ENCODE measurements at regions of chr20 and their contacts with region 1.

Region 1: GRCh38 chr20:472889-473292 is 10.6 kb upstream of the TBC1D20 start:
- DNase-seq: no peak
- ATAC-seq: peak; percentile 26 to 54; a peak in 3 of 6 replicates
- H3K4me3 ChIP-seq: no peak overlapping the region
- H3K27ac ChIP-seq: no peak overlapping the region
- H3K4me1 ChIP-seq: no peaks in the 10 kb centered on the region
- CTCF ChIP-seq: no peak
- EP300 ChIP-seq: no peak
- POLR2A ChIP-seq: no peak
- RAD21 ChIP-seq: no peak

Region 2: DNA sequence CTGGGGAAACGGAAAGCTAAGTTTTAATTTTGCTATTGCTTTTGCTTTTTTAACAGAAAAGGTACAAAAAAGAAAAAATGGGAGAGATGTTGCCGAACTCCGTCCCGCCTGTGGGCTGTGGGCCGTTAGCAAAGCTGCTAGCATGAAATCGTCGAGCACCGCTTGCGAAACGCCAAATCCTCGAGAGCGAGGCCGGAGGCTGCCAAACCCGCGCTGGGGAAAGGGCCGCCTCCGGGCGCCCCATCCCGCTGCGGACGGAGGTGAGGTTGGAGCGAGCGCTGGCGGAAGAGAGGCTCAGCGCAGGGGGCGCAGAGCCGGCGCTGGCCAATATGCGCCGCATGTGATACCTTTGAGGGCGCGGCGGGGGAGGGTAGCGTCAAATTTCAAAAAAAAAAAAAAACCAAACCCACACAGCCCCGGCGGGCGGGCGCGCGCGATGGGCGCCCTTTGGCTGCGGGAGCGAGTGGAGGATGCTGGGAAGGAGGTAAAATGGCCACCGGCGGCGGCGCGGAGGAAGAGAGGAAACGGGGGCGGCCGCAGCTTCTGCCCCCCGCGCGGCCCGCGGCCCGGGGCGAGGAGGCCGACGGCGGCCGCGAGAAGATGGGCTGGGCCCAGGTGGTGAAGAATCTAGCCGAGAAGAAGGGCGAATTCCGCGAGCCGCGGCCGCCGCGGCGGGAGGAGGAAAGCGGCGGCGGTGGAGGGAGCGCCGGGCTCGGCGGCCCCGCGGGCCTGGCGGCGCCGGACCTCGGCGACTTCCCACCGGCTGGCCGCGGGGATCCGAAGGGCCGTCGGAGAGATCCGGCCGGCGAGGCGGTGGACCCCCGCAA is 175.6 kb before region 1 on chr20 and contains the start of gene ZCCHC3:
- CTCF ChIA-PET with region 1: no interaction called
- POLR2A ChIA-PET with region 1: no interaction called
- DNase-seq: peak; percentile 94 to 95
- ATAC-seq: peak; percentile 92 to 96
- H3K4me3 ChIP-seq: peak within 1 kb of the TSS; percentile 75
- H3K27ac ChIP-seq: peak within 1 kb of the TSS; percentile 95 to 97
- H3K4me1 ChIP-seq: peaks cover 33% of the 10 kb centered on the region
- CTCF ChIP-seq: peak; percentile 31; the same call in 2 of the 3 replicates
- EP300 ChIP-seq: no peak
- POLR2A ChIP-seq: peak; percentile 51
- RAD21 ChIP-seq: peak; percentile 5 to 46; a peak in 3 of 5 replicates
- polyA plus RNA-seq, gene ZCCHC3: 17.4 and 19.8 TPM in 2 replicates

Region 3: DNA sequence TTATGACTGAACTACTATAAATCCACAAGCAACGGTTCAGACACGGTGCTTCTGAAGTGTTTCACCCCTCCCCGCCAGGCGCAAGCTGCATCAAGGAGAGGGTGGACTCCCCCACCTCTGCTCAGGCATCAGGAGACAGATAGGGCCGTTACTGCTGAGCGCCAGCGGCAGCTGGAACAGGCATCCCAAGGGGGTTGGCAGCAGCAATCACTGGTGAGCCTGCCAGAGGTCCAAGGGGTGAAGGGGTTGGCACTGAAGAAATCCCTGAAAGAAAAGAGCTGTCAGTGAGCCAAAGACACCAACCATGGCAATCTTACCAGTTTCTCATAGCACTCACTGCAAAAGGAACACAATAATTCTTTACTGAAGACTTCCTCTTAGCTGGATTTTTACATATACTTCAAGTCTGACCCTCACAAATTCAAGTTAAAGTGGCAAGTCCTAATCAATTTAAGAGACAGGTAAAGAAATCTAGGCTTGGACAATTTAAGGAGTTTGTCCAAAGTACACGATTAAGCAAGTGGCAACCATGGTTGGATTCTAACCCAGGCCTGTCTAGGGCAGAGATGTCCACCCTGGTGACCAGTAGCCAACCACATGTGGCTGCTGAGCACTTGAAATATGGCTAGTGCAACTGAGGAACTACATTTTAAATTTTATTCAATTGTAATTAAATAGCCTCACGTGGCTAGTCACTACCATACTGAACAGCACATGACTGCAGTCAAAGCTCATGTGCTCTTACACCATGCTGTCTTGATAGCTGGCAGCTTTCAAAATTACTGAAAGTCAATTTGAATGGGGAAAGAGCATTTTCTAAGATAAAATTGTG is 11.1 kb after region 1 on chr20:
- CTCF ChIA-PET with region 1: interaction called, 24 read pairs
- POLR2A ChIA-PET with region 1: interaction called, 3 read pairs
- DNase-seq: no peak
- ATAC-seq: no peak
- H3K4me3 ChIP-seq: no peak overlapping the region
- H3K27ac ChIP-seq: no peak overlapping the region
- H3K4me1 ChIP-seq: peaks cover 3% of the 10 kb centered on the region; the same call in 2 of the 3 replicates
- CTCF ChIP-seq: no peak
- EP300 ChIP-seq: no peak
- POLR2A ChIP-seq: no peak
- RAD21 ChIP-seq: no peak

Region 4: DNA sequence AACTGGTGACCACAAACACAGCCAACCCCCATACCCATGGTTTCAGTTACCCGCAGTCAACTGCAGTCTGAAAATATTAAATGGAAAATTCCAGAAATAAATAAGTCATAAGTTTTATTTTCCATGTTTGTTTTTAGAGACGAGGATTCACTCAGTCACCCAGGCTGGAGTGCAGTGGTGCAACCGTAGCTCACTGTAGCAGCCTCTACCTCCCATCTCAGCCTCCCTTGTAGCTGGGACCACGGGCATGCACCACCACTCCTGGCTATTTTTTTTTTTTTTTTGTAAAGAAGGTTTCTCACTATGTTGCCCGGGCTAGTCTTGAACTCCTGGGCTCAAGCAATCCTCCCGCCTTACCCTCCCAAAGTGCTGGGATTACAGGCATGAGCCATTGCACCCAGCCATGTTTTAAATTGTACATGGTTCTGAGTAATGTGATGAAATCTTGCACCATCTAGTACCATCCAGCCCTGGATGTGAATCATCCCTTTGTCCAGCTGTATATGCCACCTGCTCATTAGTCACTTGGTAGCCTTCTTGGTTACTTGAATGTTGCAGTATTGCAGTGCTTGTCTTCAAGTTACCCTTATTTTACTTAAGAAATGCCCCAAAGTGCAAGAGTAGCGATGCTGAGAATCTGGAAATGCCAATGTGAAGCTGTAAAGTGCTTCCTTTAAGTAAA is 56.2 kb after region 1 on chr20:
- CTCF ChIA-PET with region 1: no interaction called
- POLR2A ChIA-PET with region 1: no interaction called
- DNase-seq: peak; percentile 58 to 65
- ATAC-seq: peak; percentile 75 to 96
- H3K4me3 ChIP-seq: no peak overlapping the region
- H3K27ac ChIP-seq: peak overlapping the region; percentile 82
- H3K4me1 ChIP-seq: peaks cover 59% of the 10 kb centered on the region
- CTCF ChIP-seq: no peak
- EP300 ChIP-seq: peak; percentile 46 to 50; a peak in 2 of 5 replicates
- POLR2A ChIP-seq: no peak
- RAD21 ChIP-seq: no peak